ENCODE measurements at regions of chr15 and their contacts with region 1.

Region 1: DNA sequence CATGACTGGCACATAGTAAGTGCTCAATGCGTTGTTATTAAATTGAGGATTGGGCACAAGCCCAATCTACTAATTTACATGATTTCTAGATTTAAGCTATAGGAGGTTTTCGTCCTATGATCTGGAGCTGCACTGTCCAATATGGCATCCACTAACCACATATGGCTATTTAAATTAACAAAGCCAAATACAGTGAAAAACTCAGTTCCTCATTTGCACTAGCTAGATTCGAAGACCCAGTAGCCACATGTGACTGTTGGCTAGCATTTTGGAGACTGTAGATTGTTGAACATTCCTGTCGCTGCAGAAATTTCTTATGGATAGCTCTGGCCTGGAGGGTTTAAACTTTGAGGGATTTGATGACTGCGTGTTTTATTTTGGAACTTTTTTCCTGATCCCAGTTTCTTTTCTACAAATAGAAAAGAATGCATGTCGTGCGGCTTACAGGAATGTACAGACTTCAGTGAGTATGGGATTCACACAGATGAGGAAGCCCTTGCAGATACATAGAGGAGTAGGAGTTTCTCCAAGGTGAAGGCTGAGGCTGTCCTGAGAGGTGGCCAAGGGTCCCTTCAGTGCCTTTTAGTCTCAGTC is 82.8 kb downstream of the SLCO3A1 start:
- DNase-seq: no peak
- H3K4me3 ChIP-seq: no peak overlapping the region
- H3K27ac ChIP-seq: no peak overlapping the region
- H3K4me1 ChIP-seq: peaks cover 21% of the 10 kb centered on the region
- H3K27me3 ChIP-seq: no peaks in the 10 kb centered on the region
- CTCF ChIP-seq: no peak

Region 2: DNA sequence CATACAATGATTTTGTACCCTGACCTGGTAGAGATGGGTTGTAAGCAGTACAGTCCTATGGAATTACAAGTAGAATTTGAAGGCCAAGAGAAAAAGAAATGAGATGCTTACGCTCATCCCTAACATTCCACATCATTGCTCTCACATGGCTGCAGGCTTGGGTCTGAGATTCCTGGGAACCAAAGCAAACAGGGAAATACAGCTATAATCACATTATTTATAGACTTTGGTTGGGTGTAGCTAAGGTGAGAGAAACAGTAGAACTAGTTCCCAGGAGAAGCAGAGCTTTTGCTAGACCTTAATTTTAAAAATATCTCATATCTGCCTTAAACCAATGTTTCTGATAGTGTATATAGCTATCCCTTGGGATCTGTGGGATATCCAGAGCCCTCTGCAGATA is 31.3 kb before region 1 on chr15:
- CTCF ChIA-PET with region 1: no interaction called
- dilution Hi-C with region 1: loop called (anchors 5 kb)
- in situ Hi-C with region 1: no loop called
- intact Hi-C with region 1: no loop called
- DNase-seq: no peak
- H3K4me3 ChIP-seq: no peak overlapping the region
- H3K27ac ChIP-seq: no peak overlapping the region
- H3K4me1 ChIP-seq: peaks cover 8% of the 10 kb centered on the region
- H3K27me3 ChIP-seq: no peaks in the 10 kb centered on the region
- CTCF ChIP-seq: no peak

Measured in mammary epithelial cell (primary cell).